ENCODE measurements at regions of chr10 and their contacts with region 1.

Region 1: DNA sequence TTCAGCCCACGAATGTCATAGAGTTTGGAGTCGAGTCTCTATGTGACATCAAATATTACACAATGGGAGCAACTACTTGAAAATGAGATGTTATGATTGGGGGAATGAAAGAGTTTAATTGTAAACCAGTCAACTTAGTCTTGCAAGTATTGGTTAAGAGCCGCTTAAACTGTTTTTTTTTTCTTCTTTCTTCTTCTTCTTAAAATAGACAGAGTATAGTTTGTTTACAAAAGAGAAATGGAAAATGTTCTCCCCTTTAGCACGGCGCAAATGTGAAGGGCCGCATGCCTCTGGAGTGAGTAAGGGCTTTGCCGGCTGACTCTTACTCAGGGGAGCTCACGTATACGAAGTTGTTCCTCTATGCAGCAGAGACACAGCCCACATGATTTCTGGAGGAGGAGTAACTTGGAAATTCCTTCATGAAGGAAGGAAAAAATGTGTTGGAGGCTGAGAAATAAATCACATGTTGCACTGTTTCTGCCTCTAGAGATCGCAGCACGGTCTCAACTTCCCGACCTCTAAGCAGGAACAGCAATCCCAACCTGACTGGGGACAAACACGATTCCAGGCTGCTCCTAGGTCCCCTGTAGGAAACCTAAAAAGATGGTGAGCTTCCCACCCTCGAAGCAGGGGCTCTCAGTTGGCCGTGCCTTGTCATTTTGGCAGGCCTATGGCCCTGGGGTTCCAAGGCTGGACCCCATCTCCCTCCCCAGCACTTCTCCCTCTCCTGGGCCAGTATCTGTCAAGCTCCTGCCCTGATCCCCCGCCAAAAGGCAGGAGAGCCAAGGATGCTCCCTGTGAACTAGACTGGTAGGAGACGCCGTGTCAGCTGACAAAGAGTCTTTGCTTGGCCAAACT is 44.8 kb downstream of the MYOF start:
- DNase-seq: peak; percentile 89 to 96
- ATAC-seq: peak; percentile 93 to 94
- H3K4me3 ChIP-seq: peak overlapping the region; percentile 13; the same call in 2 of the 3 replicates
- H3K27ac ChIP-seq: peak overlapping the region; percentile 97 to 98
- H3K4me1 ChIP-seq: peaks cover 93% of the 10 kb centered on the region
- CTCF ChIP-seq: no peak
- EP300 ChIP-seq: peak in 1 of 2 experiments; percentile 52; a peak in 2 of 5 replicates
- POLR2A ChIP-seq: no peak
- RAD21 ChIP-seq: peak in 1 of 2 experiments; percentile 22; a peak in 3 of 5 replicates

Region 2: GRCh38 chr10:93458821-93459257 is 21.5 kb after region 1 on chr10:
- CTCF ChIA-PET with region 1: interaction called, 21 read pairs
- POLR2A ChIA-PET with region 1: interaction called, 36 read pairs
- DNase-seq: peak; percentile 91 to 99
- ATAC-seq: peak; percentile 90 to 96
- H3K4me3 ChIP-seq: no peak overlapping the region
- H3K27ac ChIP-seq: peak overlapping the region; percentile 96 to 99
- H3K4me1 ChIP-seq: peaks cover 84% of the 10 kb centered on the region
- CTCF ChIP-seq: no peak
- EP300 ChIP-seq: peak; percentile 61 to 82; a peak in 2 of 5 replicates
- POLR2A ChIP-seq: no peak
- RAD21 ChIP-seq: peak; percentile 41 to 45

Region 3: GRCh38 chr10:93463678-93464476 is 26.6 kb after region 1 on chr10:
- CTCF ChIA-PET with region 1: interaction called, 21 read pairs
- POLR2A ChIA-PET with region 1: interaction called, 36 read pairs
- DNase-seq: peak in 1 of 2 experiments; percentile 70
- ATAC-seq: no peak
- H3K4me3 ChIP-seq: no peak overlapping the region
- H3K27ac ChIP-seq: peak overlapping the region; percentile 96 to 99
- H3K4me1 ChIP-seq: peaks cover 93% of the 10 kb centered on the region
- CTCF ChIP-seq: no peak
- EP300 ChIP-seq: no peak
- POLR2A ChIP-seq: no peak
- RAD21 ChIP-seq: no peak

Region 4: GRCh38 chr10:93471110-93471651 is 33.9 kb after region 1 on chr10:
- CTCF ChIA-PET with region 1: interaction called, 11 read pairs
- POLR2A ChIA-PET with region 1: interaction called, 36 read pairs
- DNase-seq: peak; percentile 88 to 96
- ATAC-seq: peak; percentile 59 to 60
- H3K4me3 ChIP-seq: no peak overlapping the region
- H3K27ac ChIP-seq: peak overlapping the region; percentile 92 to 93
- H3K4me1 ChIP-seq: peaks cover 91% of the 10 kb centered on the region
- CTCF ChIP-seq: no peak
- EP300 ChIP-seq: peak; percentile 84 to 92; a peak in 3 of 5 replicates
- POLR2A ChIP-seq: no peak
- RAD21 ChIP-seq: peak; percentile 19 to 52